GM12878 (cell line): ENCODE measurements at regions of chr3 and their contacts with region 1.

Region 1: GRCh38 chr3:161540594-161540993 is 44.0 kb downstream of the OTOL1 start:
- DNase-seq: no peak
- ATAC-seq: peak; percentile 97
- H3K4me3 ChIP-seq: no peak overlapping the region
- H3K27ac ChIP-seq: no peak overlapping the region
- H3K4me1 ChIP-seq: no peaks in the 10 kb centered on the region
- H3K27me3 ChIP-seq: no peaks in the 10 kb centered on the region
- CTCF ChIP-seq: no peak
- EP300 ChIP-seq: no peak
- POLR2A ChIP-seq: no peak
- RAD21 ChIP-seq: no peak

Region 2: DNA sequence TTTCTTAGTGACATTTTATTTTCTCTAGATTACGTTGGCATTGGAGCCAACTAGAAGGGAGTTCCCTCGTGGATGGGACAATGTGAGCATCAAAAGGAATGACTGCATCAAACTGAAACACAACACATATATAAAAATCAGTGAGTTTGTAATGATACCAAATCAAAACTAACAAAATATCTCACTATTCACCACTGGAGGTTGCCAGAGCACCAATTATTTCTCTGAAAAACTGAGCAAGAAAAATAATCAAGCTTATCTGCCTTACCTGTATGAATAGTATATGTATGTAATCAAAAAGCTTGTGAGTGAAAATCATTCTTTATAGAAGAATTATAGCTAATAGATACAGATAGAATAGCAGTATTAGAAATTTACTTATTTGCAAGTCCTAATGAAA is 90.8 kb before region 1 on chr3:
- CTCF ChIA-PET with region 1: no interaction called
- POLR2A ChIA-PET with region 1: no interaction called
- RAD21 ChIA-PET with region 1: no interaction called
- SMC1A ChIA-PET with region 1: no interaction called
- in situ Hi-C with region 1: no loop called
- intact Hi-C with region 1: loop called (anchors 5 kb)
- DNase-seq: no peak
- ATAC-seq: peak; percentile 36; the same call in 2 of the 3 replicates
- H3K4me3 ChIP-seq: no peak overlapping the region
- H3K27ac ChIP-seq: no peak overlapping the region
- H3K4me1 ChIP-seq: no peaks in the 10 kb centered on the region
- H3K27me3 ChIP-seq: no peaks in the 10 kb centered on the region
- CTCF ChIP-seq: no peak; a peak in 1 of 6 replicates
- EP300 ChIP-seq: no peak
- POLR2A ChIP-seq: no peak
- RAD21 ChIP-seq: no peak

Region 3: DNA sequence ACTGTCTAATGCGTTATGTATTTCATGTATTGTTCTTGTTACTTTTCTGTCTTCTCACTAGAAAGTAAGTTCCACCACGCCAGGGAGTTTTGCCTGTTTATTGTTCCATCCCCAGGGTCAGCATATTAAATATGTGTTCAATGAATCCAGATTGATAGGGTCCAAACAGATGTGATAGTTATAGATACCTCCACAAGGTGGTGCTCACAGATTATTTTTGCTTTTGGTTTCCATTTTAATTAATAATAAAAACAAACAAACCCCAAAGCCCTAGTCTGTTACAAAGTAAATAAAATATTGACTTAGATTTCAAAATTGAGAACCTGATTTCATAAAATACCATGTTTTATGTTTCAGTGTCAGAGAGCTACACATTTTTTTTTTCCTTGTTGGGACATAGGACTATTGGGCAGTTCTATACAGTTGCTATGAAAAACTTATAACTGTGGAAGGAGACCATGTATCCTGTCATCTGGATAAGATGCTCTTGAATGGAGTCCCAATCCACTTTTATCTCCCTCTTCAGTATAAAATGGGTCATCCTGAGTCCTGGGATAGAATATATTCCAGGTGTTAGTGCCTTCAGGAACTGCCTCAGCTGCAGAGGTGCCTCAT is 31.6 kb before region 1 on chr3:
- CTCF ChIA-PET with region 1: interaction called, 14 read pairs
- POLR2A ChIA-PET with region 1: no interaction called
- RAD21 ChIA-PET with region 1: no interaction called
- SMC1A ChIA-PET with region 1: no interaction called
- in situ Hi-C with region 1: no loop called
- intact Hi-C with region 1: no loop called
- DNase-seq: no peak
- ATAC-seq: peak; percentile 89
- H3K4me3 ChIP-seq: no peak overlapping the region
- H3K27ac ChIP-seq: no peak overlapping the region
- H3K4me1 ChIP-seq: no peaks in the 10 kb centered on the region
- H3K27me3 ChIP-seq: no peaks in the 10 kb centered on the region
- CTCF ChIP-seq: peak; percentile 27 to 52 (median 33); a peak in 4 of 6 replicates
- EP300 ChIP-seq: no peak
- POLR2A ChIP-seq: no peak
- RAD21 ChIP-seq: peak; percentile 42

Region 4: GRCh38 chr3:161640181-161640580 is 99.6 kb after region 1 on chr3:
- CTCF ChIA-PET with region 1: no interaction called
- POLR2A ChIA-PET with region 1: no interaction called
- RAD21 ChIA-PET with region 1: no interaction called
- SMC1A ChIA-PET with region 1: no interaction called
- in situ Hi-C with region 1: no loop called
- intact Hi-C with region 1: no loop called
- DNase-seq: no peak
- ATAC-seq: no peak
- H3K4me3 ChIP-seq: no peak overlapping the region
- H3K27ac ChIP-seq: no peak overlapping the region
- H3K4me1 ChIP-seq: no peaks in the 10 kb centered on the region
- H3K27me3 ChIP-seq: no peaks in the 10 kb centered on the region
- CTCF ChIP-seq: no peak
- EP300 ChIP-seq: no peak
- POLR2A ChIP-seq: no peak
- RAD21 ChIP-seq: no peak